Heart right ventricle (tissue), 16 donors: ENCODE measurements at regions of chr3 and their contacts with region 1.

Region 1: GRCh38 chr3:58640700-58641372 is 25.7 kb downstream of the FAM3D start:
- DNase-seq: peak; percentile 64 to 81
- ATAC-seq: peak; percentile 84 to 94 (median 88)
- H3K4me3 ChIP-seq: no peak overlapping the region
- H3K27ac ChIP-seq: no peak overlapping the region
- H3K4me1 ChIP-seq: peaks cover 0 to 6% (median 0%) of the 10 kb centered on the region in 9 donors
- H3K27me3 ChIP-seq: peaks cover 0 to 7% (median 0%) of the 10 kb centered on the region in 7 donors
- CTCF ChIP-seq: peak; percentile 67 to 93 (median 87)

Region 2: GRCh38 chr3:58697561-58697960 is 56.7 kb after region 1 on chr3:
- intact Hi-C with region 1: no loop called
- DNase-seq: no peak
- ATAC-seq: no peak
- H3K4me3 ChIP-seq: no peak overlapping the region
- H3K27ac ChIP-seq: no peak overlapping the region
- H3K4me1 ChIP-seq: peaks cover 0 to 2% (median 0%) of the 10 kb centered on the region in 9 donors
- H3K27me3 ChIP-seq: no peaks in the 10 kb centered on the region
- CTCF ChIP-seq: no peak

Region 3: DNA sequence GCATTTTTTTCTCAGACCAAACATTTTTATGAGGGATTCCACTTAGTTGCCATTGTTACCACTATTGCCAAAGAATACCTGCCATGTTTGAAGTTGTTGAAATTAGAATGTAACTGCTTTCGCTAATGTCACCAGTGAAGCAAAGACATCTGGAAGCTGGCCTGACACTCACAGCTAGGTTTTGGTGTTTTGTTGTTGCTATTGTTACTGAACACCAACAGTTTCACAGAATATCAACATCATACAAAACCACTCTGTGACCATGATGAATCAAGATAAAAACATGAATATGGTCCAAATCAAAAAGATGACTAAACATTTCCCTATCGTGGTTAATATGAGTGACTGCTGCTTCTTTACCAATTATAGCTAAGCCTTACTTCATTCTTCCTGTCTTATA is 415.9 kb after region 1 on chr3:
- intact Hi-C with region 1: loop called in 9 of 10 experiments (anchors 2 to 10 kb)
- DNase-seq: no peak
- ATAC-seq: no peak
- H3K4me3 ChIP-seq: no peak overlapping the region
- H3K27ac ChIP-seq: no peak overlapping the region
- H3K4me1 ChIP-seq: no peaks in the 10 kb centered on the region
- H3K27me3 ChIP-seq: no peaks in the 10 kb centered on the region
- CTCF ChIP-seq: no peak